HepG2 (cell line): ENCODE measurements at regions of chr9 and their contacts with region 1.

Region 1: DNA sequence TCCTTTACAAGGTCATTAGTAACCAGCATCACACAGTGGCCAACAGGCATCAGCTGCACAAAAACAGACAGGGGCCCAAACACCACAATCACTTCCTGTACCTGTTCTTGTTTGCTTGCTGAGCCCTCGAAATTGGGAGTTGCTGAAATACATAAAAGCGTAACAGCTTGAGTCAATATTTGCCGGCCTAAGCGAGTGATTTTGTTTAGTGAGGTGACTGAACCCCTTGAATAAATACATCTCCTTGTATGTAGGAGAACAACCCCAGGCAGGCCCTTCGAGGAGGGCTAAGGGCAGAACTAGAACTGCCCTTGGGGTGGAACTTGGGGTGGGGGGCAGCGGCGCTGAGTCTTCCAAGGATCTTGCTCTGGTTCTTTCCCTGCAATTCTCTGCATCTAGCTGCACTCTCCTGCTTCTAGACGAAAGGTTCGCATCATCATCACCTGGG is 502.5 kb downstream of the RASEF start:
- DNase-seq: peak; percentile 97
- ATAC-seq: peak; percentile 96
- H3K4me3 ChIP-seq: no peak overlapping the region
- H3K27ac ChIP-seq: peak overlapping the region; percentile 61
- H3K4me1 ChIP-seq: peaks cover 67% of the 10 kb centered on the region
- H3K27me3 ChIP-seq: no peaks in the 10 kb centered on the region
- CTCF ChIP-seq: peak; percentile 49
- EP300 ChIP-seq: peak; percentile 77 to 99; a peak in 3 of 4 replicates
- POLR2A ChIP-seq: no peak
- RAD21 ChIP-seq: no peak

Region 2: DNA sequence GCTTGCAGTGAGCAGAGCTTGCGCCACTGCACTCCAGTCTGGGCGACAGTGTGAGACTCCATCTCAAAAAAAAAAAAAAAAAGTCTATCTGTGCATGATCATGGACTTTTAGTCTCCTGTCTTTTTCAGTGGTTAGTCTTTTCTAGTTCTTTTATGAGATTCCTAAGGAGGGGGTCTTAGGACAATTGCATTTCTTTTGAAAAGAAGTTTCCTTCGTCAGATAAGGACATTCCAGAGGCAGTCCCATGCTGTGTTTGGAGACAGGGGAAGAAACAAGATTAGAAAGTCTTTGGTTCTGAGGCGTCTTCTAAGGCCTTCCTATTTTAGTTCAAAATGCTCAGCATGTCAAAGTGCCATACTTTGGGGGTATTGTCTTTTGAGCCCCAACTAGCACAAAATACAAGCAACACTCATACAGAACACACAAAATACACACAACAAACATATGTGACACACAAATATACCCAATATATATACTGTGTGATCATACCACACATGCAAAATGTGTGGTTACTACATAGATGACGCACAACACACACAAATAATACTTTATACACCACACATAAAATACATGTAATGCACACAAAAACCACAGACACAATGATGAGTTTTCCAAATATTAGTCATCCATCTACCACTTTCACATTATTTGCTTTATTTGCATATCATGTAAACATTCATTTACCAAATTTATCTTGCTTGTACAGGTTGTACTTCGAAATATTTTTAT is 177.4 kb before region 1 on chr9:
- CTCF ChIA-PET with region 1: no interaction called
- POLR2A ChIA-PET with region 1: no interaction called
- in situ Hi-C with region 1: no loop called
- intact Hi-C with region 1: no loop called
- DNase-seq: no peak
- ATAC-seq: no peak
- H3K4me3 ChIP-seq: no peak overlapping the region
- H3K27ac ChIP-seq: no peak overlapping the region
- H3K4me1 ChIP-seq: no peaks in the 10 kb centered on the region
- H3K27me3 ChIP-seq: no peaks in the 10 kb centered on the region
- CTCF ChIP-seq: no peak
- EP300 ChIP-seq: no peak
- POLR2A ChIP-seq: no peak
- RAD21 ChIP-seq: no peak

Region 3: DNA sequence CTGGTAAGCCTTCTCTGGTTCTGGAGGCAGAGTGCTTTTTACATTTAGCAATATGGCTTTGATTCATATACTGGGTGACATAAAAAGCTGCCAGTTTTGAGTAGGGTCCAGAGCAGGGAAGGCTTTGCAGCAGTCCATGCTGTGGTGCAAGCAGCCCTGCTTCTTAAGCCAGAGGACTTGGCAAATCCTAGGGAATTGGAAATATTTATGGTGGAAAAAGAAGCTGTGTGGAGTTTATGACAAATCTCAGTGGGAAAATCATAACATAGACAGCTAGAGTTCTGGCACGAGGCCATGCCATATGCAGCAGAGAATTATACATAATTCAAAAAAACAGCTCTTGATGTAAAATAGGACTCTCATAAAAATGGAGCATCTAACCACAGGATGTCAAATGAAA is 33.9 kb before region 1 on chr9:
- CTCF ChIA-PET with region 1: no interaction called
- POLR2A ChIA-PET with region 1: no interaction called
- in situ Hi-C with region 1: no loop called
- intact Hi-C with region 1: no loop called
- DNase-seq: no peak
- ATAC-seq: no peak
- H3K4me3 ChIP-seq: no peak overlapping the region
- H3K27ac ChIP-seq: no peak overlapping the region
- H3K4me1 ChIP-seq: no peaks in the 10 kb centered on the region
- H3K27me3 ChIP-seq: no peaks in the 10 kb centered on the region
- CTCF ChIP-seq: no peak
- EP300 ChIP-seq: no peak
- POLR2A ChIP-seq: no peak
- RAD21 ChIP-seq: no peak

Region 4: GRCh38 chr9:82601293-82601771 is 40.9 kb after region 1 on chr9:
- CTCF ChIA-PET with region 1: no interaction called
- POLR2A ChIA-PET with region 1: interaction called, 19 read pairs
- in situ Hi-C with region 1: no loop called
- intact Hi-C with region 1: loop called (anchors 1 kb)
- DNase-seq: peak; percentile 66
- ATAC-seq: peak; percentile 77
- H3K4me3 ChIP-seq: peak overlapping the region in 2 of 3 experiments; percentile 56 to 73; a peak in 4 of 6 replicates
- H3K27ac ChIP-seq: peak overlapping the region; percentile 86
- H3K4me1 ChIP-seq: peaks cover 99% of the 10 kb centered on the region
- H3K27me3 ChIP-seq: no peaks in the 10 kb centered on the region
- CTCF ChIP-seq: no peak
- EP300 ChIP-seq: no peak
- POLR2A ChIP-seq: no peak
- RAD21 ChIP-seq: no peak